ENCODE measurements at regions of chr5 and their contacts with region 1.

Region 1: DNA sequence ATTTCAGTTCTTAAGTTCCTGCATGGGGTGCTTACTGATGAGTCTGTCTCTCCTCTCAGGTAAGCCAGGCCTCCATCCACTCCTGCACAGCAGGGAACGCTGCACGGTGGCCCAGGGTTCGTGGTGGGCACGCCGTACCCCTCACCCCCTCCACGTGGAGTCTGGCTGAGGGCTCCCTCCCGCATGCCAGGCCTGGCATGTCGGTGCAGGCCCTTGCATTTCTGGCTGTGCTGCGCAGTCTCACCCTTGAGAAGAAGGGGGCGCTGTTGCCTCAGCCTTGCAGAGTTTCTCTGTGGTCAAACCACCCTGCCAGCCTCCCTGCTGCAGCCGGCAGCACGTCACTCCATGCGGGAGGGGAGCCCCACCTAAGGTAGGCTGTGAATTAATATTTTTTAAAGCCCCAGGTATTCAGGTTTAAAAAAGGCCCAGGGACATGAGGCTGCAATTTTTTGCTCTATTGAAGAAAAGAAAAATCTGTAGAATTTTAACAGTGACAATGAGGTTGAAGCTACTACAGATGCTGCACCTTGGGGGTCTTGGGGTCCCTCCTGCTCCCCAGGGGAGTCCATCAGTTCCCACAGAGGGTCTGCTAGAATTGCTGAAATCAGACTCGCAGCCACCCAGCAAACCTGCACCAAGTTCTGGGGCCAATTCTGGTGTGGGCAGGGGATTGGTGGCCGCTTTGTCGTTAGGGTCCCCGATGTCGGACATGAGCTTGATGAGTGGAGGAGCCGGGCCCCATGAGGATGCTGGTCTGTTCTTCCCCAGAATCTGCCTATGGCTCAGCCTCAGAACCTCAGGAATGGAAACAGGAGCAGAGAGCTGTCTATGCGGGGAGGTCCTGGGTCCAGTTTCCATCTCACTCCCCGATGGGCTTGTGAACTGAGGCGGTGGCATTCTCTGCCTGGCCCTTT is 52.6 kb downstream of the TENT4A start:
- DNase-seq: peak; percentile 74
- H3K4me3 ChIP-seq: no peak overlapping the region
- H3K27ac ChIP-seq: no peak overlapping the region
- H3K4me1 ChIP-seq: peaks cover 10% of the 10 kb centered on the region
- H3K27me3 ChIP-seq: no peaks in the 10 kb centered on the region
- CTCF ChIP-seq: peak; percentile 78 to 92
- POLR2A ChIP-seq: no peak

Region 2: DNA sequence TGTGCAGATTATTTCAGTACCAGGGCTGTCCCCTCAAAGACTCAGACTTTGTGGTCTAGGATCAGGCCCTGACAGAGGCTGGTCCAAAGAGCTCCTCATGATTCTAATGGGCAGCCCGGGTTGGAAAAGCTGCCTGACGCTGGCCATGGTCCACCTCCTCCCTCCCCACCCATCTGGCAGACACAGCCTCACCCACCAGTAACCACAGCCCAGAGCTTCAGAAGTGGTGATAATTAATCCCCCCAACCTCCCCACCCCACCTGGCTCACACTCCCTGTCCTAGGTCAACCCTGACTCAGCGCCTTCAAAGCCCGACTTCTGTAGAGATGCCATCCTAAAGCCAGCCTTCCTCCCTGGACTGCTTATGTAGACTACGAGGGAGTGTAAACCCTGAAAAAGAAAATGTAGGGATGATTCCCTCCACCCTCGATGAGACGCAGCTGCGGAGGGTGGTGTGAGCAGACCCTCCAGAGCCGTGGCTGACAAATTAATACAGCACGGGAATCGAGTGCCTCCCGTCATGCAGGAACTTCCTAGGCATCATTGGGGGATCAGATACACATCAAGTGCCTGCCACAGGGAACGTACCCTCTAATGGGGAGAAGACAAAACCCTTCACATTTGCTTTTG is 310.2 kb before region 1 on chr5:
- CTCF ChIA-PET with region 1: no interaction called
- POLR2A ChIA-PET with region 1: no interaction called
- dilution Hi-C with region 1: no loop called
- intact Hi-C with region 1: no loop called
- DNase-seq: no peak
- H3K4me3 ChIP-seq: no peak overlapping the region
- H3K27ac ChIP-seq: no peak overlapping the region
- H3K4me1 ChIP-seq: no peaks in the 10 kb centered on the region
- H3K27me3 ChIP-seq: peaks cover 11 to 13% of the 10 kb centered on the region in 2 experiments
- CTCF ChIP-seq: no peak
- POLR2A ChIP-seq: no peak

Region 3: GRCh38 chr5:6820851-6821479 is 55.1 kb after region 1 on chr5:
- CTCF ChIA-PET with region 1: interaction called, 10 read pairs
- POLR2A ChIA-PET with region 1: no interaction called
- dilution Hi-C with region 1: no loop called
- intact Hi-C with region 1: no loop called
- DNase-seq: no peak
- H3K4me3 ChIP-seq: no peak overlapping the region
- H3K27ac ChIP-seq: no peak overlapping the region
- H3K4me1 ChIP-seq: no peaks in the 10 kb centered on the region
- H3K27me3 ChIP-seq: no peaks in the 10 kb centered on the region
- CTCF ChIP-seq: peak; percentile 43 to 54
- POLR2A ChIP-seq: no peak

Region 4: DNA sequence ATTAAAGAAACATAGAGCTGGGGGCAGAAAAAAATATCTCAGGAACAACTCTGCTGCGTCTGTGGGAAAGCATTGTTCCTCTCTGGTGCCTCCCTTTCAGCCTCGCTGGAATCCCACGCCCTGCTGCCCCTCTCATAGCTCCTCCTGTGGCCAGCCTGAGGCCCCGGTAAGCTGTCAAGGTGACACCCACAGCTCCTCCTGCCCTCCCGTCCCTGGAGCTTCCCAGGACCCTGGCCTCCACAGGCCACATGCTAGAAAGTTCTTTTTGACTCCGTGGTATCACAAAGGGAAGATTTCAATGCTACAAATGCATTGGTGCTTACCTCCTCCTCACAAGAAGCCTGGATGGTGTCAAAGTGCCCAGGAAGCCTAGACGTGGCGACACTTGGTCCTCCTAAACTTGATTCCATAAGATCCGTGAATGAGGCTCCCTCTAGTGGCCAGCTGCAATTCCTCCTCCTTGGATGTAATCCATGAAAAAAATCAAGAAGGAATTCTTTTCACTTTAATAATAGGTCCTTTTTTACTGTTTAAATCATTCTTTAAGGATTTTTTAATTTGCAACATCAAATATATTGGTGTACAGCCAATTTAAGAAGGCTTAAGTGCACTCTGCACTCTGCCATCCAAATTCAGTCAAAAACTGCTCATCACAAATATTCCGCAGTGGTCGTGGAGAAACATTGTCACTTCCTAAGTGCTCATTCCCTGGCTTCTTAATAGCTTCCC is 980.2 kb after region 1 on chr5:
- CTCF ChIA-PET with region 1: interaction called, 89 read pairs
- POLR2A ChIA-PET with region 1: no interaction called
- dilution Hi-C with region 1: no loop called
- intact Hi-C with region 1: loop called (anchors 1 kb)
- DNase-seq: peak; percentile 52
- H3K4me3 ChIP-seq: no peak overlapping the region
- H3K27ac ChIP-seq: no peak overlapping the region
- H3K4me1 ChIP-seq: no peaks in the 10 kb centered on the region
- H3K27me3 ChIP-seq: no peaks in the 10 kb centered on the region
- CTCF ChIP-seq: peak; percentile 71 to 78
- POLR2A ChIP-seq: no peak

Region 5: DNA sequence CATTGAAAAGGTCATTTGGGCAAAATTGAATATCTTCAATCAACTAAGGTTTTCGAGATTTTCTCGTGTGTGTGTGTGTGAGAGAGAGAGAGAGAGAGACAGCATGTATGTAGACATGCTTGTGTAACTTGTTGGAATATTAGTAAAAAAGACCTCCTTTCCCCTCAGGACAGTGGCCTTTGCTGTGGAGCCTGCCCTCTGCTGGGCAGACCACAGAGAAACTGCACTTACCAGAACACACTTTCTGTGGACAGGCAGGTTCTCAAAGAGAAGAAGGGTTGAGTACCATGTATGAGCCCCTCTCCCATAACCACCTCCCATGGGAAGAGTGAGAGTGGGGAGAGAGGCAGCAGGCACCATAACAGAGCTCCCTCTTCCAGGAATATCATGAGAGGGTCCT is 1039.5 kb after region 1 on chr5:
- CTCF ChIA-PET with region 1: interaction called, 3 read pairs
- POLR2A ChIA-PET with region 1: no interaction called
- dilution Hi-C with region 1: no loop called
- intact Hi-C with region 1: loop called (anchors 1 kb)
- DNase-seq: no peak
- H3K4me3 ChIP-seq: no peak overlapping the region
- H3K27ac ChIP-seq: no peak overlapping the region
- H3K4me1 ChIP-seq: no peaks in the 10 kb centered on the region
- H3K27me3 ChIP-seq: no peaks in the 10 kb centered on the region
- CTCF ChIP-seq: peak; percentile 4 to 5
- POLR2A ChIP-seq: no peak

Region 6: GRCh38 chr5:7856855-7857254 is 1091.0 kb after region 1 on chr5:
- CTCF ChIA-PET with region 1: interaction called, 7 read pairs
- POLR2A ChIA-PET with region 1: no interaction called
- dilution Hi-C with region 1: no loop called
- intact Hi-C with region 1: loop called (anchors 10 kb)
- DNase-seq: peak; percentile 13
- H3K4me3 ChIP-seq: no peak overlapping the region
- H3K27ac ChIP-seq: no peak overlapping the region
- H3K4me1 ChIP-seq: no peaks in the 10 kb centered on the region
- H3K27me3 ChIP-seq: peaks cover 0 to under 1% of the 10 kb centered on the region in 2 experiments
- CTCF ChIP-seq: peak; percentile 37 to 47
- POLR2A ChIP-seq: no peak